ENCODE measurements at regions of chrX and their contacts with region 1.

Region 1: GRCh38 chrX:20252381-20253231 is 14.1 kb downstream of the RPS6KA3 start:
- DNase-seq: peak; percentile 26
- ATAC-seq: peak; percentile 75
- H3K4me3 ChIP-seq: no peak overlapping the region
- H3K27ac ChIP-seq: no peak overlapping the region
- H3K4me1 ChIP-seq: peaks cover 0 to 7% of the 10 kb centered on the region in 2 experiments; a peak in 1 of 4 replicates
- H3K27me3 ChIP-seq: no peaks in the 10 kb centered on the region
- CTCF ChIP-seq: peak; percentile 27 to 68 (median 57); a peak in 5 of 6 replicates
- POLR2A ChIP-seq: no peak
- RAD21 ChIP-seq: peak; percentile 58

Region 2: GRCh38 chrX:20141281-20142220 is 111.1 kb before region 1 on chrX and contains the start of gene EIF1AX:
- CTCF ChIA-PET with region 1: no interaction called
- POLR2A ChIA-PET with region 1: no interaction called
- RAD21 ChIA-PET with region 1: no interaction called
- intact Hi-C with region 1: no loop called
- DNase-seq: peak; percentile 92
- ATAC-seq: peak; percentile 99
- H3K4me3 ChIP-seq: peak within 1 kb of the TSS; percentile 78 to 86
- H3K27ac ChIP-seq: peak within 1 kb of the TSS; percentile 58
- H3K4me1 ChIP-seq: peaks cover 5 to 14% of the 10 kb centered on the region in 2 experiments; a peak in 3 of 4 replicates
- H3K27me3 ChIP-seq: no peaks in the 10 kb centered on the region
- CTCF ChIP-seq: no peak
- POLR2A ChIP-seq: no peak
- RAD21 ChIP-seq: no peak
- total RNA-seq, gene EIF1AX: 132 TPM

Region 3: DNA sequence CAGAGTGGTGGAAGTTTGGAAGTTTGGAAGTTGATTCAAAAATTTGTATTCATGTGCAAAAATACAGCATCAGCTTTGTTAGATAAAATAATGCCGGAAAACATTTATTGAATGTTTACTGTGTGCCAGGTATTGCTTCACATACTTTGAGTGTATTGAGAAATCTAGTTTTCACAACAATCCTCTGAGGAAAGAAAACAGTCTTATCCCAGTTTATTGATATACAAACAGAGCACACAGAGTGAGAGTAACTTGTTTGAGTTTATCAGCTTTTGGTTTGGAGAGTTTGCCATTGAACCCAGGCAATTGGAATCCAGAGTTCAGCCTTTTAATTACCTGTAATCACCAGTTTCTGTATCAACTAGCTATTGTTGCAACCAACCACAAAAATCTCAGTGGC is 141.3 kb after region 1 on chrX:
- CTCF ChIA-PET with region 1: no interaction called
- POLR2A ChIA-PET with region 1: no interaction called
- RAD21 ChIA-PET with region 1: no interaction called
- intact Hi-C with region 1: no loop called
- DNase-seq: no peak
- ATAC-seq: no peak
- H3K4me3 ChIP-seq: no peak overlapping the region
- H3K27ac ChIP-seq: no peak overlapping the region
- H3K4me1 ChIP-seq: no peaks in the 10 kb centered on the region
- H3K27me3 ChIP-seq: no peaks in the 10 kb centered on the region
- CTCF ChIP-seq: no peak
- POLR2A ChIP-seq: no peak
- RAD21 ChIP-seq: no peak

Region 4: GRCh38 chrX:20442597-20442996 is 190.0 kb after region 1 on chrX:
- CTCF ChIA-PET with region 1: interaction called, 3 read pairs
- POLR2A ChIA-PET with region 1: no interaction called
- RAD21 ChIA-PET with region 1: no interaction called
- intact Hi-C with region 1: loop called (anchors 1 kb)
- DNase-seq: peak; percentile 65
- ATAC-seq: peak; percentile 92
- H3K4me3 ChIP-seq: no peak overlapping the region
- H3K27ac ChIP-seq: no peak overlapping the region
- H3K4me1 ChIP-seq: no peaks in the 10 kb centered on the region
- H3K27me3 ChIP-seq: no peaks in the 10 kb centered on the region
- CTCF ChIP-seq: peak; percentile 48 to 63 (median 63); a peak in 5 of 6 replicates
- POLR2A ChIP-seq: no peak
- RAD21 ChIP-seq: peak; percentile 74